ENCODE measurements at regions of chr9 and their contacts with region 1.

Region 1: GRCh38 chr9:114366334-114367128 is 21.3 kb downstream of the AKNA start:
- DNase-seq: no peak
- ATAC-seq: peak; percentile 75
- H3K4me3 ChIP-seq: 0 out of 2 replicates have a peak overlapping the region, but pooled peaks have one; percentile 1
- H3K27ac ChIP-seq: peak overlapping the region; percentile 78
- H3K4me1 ChIP-seq: peaks cover 65% of the 10 kb centered on the region
- H3K27me3 ChIP-seq: no peaks in the 10 kb centered on the region
- CTCF ChIP-seq: no peak
- EP300 ChIP-seq: peak; percentile 61 to 79; a peak in 3 of 4 replicates
- POLR2A ChIP-seq: no peak
- RAD21 ChIP-seq: no peak

Region 2: DNA sequence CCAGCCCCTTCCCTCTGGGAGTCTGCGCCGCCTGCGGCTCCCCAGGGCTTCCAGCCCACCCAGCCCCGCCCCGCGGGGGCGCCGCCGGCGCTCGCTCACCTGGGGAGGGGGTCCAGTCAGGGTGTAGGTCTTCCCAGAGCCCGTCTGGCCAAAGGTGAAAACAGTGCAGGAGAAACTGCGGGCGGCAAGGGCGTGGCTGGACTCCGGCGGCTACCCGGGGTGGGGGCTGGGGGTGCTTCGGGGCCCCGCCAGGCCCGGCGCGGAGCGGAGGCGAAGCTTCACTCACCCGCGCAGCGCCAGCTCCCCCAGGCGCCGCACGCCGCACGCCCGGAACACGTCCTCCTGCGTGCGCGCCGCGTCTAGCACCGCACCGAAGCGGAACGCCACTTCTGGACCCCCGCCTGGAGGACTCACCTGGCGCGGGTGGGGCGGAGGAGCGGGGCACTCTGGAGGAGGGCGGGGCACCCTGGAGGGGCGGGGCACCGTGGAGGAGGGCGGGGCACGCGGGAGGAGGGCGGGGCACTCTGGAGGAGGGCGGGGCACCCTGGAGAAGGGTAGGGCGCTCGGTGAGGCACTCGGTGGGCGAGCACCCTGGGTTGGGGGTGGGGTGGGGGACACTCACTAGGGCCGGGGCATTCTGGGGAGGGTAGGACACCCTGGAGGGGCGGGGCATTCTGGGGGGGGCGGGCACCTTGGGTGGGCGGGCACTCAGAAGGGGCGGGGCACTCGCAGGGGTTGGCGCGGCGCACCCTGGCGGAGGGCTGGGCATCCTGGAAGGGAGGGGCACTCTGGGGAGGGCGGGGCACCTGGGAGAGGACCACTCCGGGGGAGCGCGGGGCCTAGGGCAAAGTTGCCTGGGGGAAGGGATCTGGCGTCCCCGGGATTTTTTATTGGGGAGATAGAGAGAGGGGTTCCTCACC is 268.3 kb before region 1 on chr9:
- CTCF ChIA-PET with region 1: no interaction called
- POLR2A ChIA-PET with region 1: no interaction called
- RAD21 ChIA-PET with region 1: no interaction called
- SMC1A ChIA-PET with region 1: no interaction called
- in situ Hi-C with region 1: no loop called
- intact Hi-C with region 1: no loop called
- DNase-seq: no peak
- ATAC-seq: no peak
- H3K4me3 ChIP-seq: no peak overlapping the region
- H3K27ac ChIP-seq: no peak overlapping the region
- H3K4me1 ChIP-seq: no peaks in the 10 kb centered on the region
- H3K27me3 ChIP-seq: no peaks in the 10 kb centered on the region; a peak in 2 of 4 replicates
- CTCF ChIP-seq: no peak
- EP300 ChIP-seq: no peak
- POLR2A ChIP-seq: no peak
- RAD21 ChIP-seq: no peak

Region 3: DNA sequence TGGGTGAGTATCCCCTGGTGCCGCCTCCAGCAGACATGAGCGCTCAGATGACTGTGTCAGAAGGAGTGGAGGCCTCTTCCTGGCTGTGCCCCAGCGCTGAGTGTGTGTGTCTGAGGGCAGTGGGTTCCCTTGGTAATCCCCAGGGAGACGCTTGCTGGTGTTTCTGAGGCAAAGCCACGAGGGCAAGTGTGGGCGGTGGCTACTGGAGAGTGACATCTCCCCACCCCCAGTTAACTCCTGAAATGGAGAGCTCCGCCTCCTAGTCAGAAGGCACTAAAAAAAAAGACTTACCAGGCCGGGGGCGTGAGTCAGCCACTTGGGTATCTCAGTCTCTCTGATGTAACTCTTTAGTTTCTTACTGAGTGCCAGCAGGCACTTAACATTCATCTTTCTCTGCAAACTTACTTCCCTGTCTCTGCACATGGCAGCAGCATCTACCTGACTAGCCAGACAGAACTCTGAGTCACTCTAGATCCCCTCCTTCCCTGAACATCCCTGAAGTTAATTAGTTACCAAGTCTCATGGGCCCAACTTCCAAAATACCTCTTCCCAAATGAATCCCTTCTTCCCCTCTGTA is 17.5 kb before region 1 on chr9:
- CTCF ChIA-PET with region 1: interaction called, 7 read pairs
- POLR2A ChIA-PET with region 1: interaction called, 22 read pairs
- RAD21 ChIA-PET with region 1: interaction called, 8 read pairs
- SMC1A ChIA-PET with region 1: interaction called, 14 read pairs
- in situ Hi-C with region 1: no loop called
- intact Hi-C with region 1: loop called (anchors 1 kb)
- DNase-seq: peak; percentile 94
- ATAC-seq: peak; percentile 96
- H3K4me3 ChIP-seq: no peak overlapping the region
- H3K27ac ChIP-seq: peak overlapping the region; percentile 29
- H3K4me1 ChIP-seq: peaks cover 25% of the 10 kb centered on the region
- H3K27me3 ChIP-seq: no peaks in the 10 kb centered on the region
- CTCF ChIP-seq: no peak
- EP300 ChIP-seq: peak; percentile 65 to 75
- POLR2A ChIP-seq: peak; percentile 59; the same call in 1 of the 2 replicates
- RAD21 ChIP-seq: no peak

Region 4: DNA sequence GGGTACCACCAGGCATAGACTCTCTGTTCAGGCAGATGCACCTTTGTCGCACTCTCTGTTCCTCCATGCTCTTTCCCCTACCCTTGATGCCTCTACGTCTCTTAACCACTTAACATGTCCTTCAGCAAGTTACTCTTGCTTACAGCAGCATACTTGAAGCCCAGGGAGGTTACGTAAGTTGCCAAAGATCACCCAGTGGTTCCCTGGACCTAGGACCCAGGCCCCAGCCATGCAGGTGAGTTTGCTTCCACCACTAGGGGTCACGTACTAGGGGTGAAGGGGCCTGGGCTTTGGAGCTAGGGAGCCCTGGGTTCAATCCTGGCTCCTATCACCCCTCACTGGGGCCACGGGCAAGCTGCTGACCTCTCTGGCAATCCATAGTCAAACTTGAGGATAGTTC is 12.4 kb after region 1 on chr9:
- CTCF ChIA-PET with region 1: interaction called, 108 read pairs
- POLR2A ChIA-PET with region 1: interaction called, 312 read pairs
- RAD21 ChIA-PET with region 1: interaction called, 251 read pairs
- SMC1A ChIA-PET with region 1: interaction called, 327 read pairs
- in situ Hi-C with region 1: no loop called
- intact Hi-C with region 1: loop called (anchors 2 kb)
- DNase-seq: no peak
- ATAC-seq: no peak
- H3K4me3 ChIP-seq: no peak overlapping the region
- H3K27ac ChIP-seq: no peak overlapping the region
- H3K4me1 ChIP-seq: peaks cover 31% of the 10 kb centered on the region
- H3K27me3 ChIP-seq: no peaks in the 10 kb centered on the region
- CTCF ChIP-seq: no peak
- EP300 ChIP-seq: no peak
- POLR2A ChIP-seq: no peak
- RAD21 ChIP-seq: no peak